Ascending aorta (tissue), 2 donors: ENCODE measurements at regions of chr9 and their contacts with region 1.

Region 1: DNA sequence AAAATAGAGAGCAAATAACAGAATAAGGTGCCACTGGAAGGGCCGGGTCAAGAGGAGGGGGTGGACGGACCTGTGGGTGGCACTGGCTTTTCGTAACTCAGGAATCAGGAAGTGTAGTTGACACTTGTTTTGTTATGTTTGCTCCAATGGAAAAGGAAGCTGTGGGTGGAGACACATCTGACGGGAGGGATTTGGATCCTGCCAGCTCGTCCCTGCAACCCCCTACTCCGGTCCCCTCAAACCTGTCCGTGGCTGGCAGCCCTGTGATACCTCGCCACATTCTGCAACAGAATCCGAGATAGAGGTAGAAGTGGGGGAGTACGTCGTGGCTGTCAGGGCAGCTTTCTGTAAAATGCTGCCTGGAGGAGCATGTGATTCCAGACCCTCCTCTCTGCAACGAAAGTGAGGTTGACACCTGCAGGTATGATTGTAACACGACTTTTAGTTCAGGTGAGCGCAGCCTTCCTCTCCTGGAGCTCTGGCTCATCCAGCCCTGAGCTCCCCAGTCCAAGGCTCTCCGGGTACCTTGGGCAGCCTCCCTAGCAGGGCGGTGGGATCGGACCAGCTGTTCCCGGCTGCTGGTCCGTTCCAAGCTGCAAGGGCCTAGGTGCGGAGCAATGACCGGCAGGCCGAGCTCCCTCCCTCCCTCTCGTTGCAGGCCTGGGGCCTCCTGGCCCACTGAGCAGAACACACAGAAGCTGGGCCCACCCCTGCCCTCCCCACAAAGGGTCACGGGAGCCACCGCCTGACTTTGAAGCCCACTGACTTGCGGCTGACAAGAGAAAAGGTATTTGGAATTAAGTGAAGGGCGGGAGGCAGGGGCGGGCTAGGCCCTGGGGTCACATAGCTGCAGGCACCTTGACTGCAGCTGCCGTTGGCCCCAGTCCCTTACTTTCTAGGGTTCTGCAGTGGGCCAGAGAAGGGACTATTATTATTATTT is 104.5 kb upstream of the IER5L start:
- DNase-seq: peak in 1 of 2 donors; percentile 56
- H3K4me3 ChIP-seq: peak overlapping the region; percentile 0 to 53
- H3K27ac ChIP-seq: no peak overlapping the region
- H3K4me1 ChIP-seq: no peaks in the 10 kb centered on the region
- H3K27me3 ChIP-seq: no peaks in the 10 kb centered on the region
- CTCF ChIP-seq: no peak

Region 2: GRCh38 chr9:129225815-129226214 is 56.7 kb before region 1 on chr9:
- intact Hi-C with region 1: loop called (anchors 5 kb)
- DNase-seq: no peak
- H3K4me3 ChIP-seq: no peak overlapping the region
- H3K27ac ChIP-seq: peak overlapping the region in 1 of 2 donors; percentile 49
- H3K4me1 ChIP-seq: no peaks in the 10 kb centered on the region
- H3K27me3 ChIP-seq: no peaks in the 10 kb centered on the region
- CTCF ChIP-seq: no peak